IMR-90 (cell line): ENCODE measurements at regions of chr15 and their contacts with region 1.

Region 1: GRCh38 chr15:85831415-85832113 is 36.8 kb upstream of the KLHL25 start:
- DNase-seq: peak; percentile 48
- ATAC-seq: peak; percentile 99
- H3K4me3 ChIP-seq: no peak overlapping the region
- H3K27ac ChIP-seq: no peak overlapping the region
- H3K4me1 ChIP-seq: no peaks in the 10 kb centered on the region
- H3K27me3 ChIP-seq: peaks cover 10% of the 10 kb centered on the region
- CTCF ChIP-seq: peak; percentile 70
- POLR2A ChIP-seq: no peak
- RAD21 ChIP-seq: peak; percentile 73

Region 2: GRCh38 chr15:85289677-85290365 is 541.7 kb before region 1 on chr15:
- CTCF ChIA-PET with region 1: no interaction called
- POLR2A ChIA-PET with region 1: no interaction called
- dilution Hi-C with region 1: no loop called
- in situ Hi-C with region 1: loop called (anchors 5 kb)
- intact Hi-C with region 1: no loop called
- DNase-seq: peak; percentile 31
- ATAC-seq: peak; percentile 59
- H3K4me3 ChIP-seq: no peak overlapping the region
- H3K27ac ChIP-seq: no peak overlapping the region
- H3K4me1 ChIP-seq: no peaks in the 10 kb centered on the region
- H3K27me3 ChIP-seq: peaks cover 3% of the 10 kb centered on the region; the same call in 1 of the 2 replicates
- CTCF ChIP-seq: peak; percentile 59
- POLR2A ChIP-seq: no peak
- RAD21 ChIP-seq: peak; percentile 58; the same call in 1 of the 2 replicates

Region 3: GRCh38 chr15:85485956-85486567 is 345.5 kb before region 1 on chr15:
- CTCF ChIA-PET with region 1: no interaction called
- POLR2A ChIA-PET with region 1: no interaction called
- dilution Hi-C with region 1: no loop called
- in situ Hi-C with region 1: loop called (anchors 10 kb)
- intact Hi-C with region 1: loop called (anchors 2 kb)
- DNase-seq: peak; percentile 81
- ATAC-seq: peak; percentile 61
- H3K4me3 ChIP-seq: no peak overlapping the region
- H3K27ac ChIP-seq: no peak overlapping the region
- H3K4me1 ChIP-seq: peaks cover 4% of the 10 kb centered on the region
- H3K27me3 ChIP-seq: no peaks in the 10 kb centered on the region
- CTCF ChIP-seq: peak; percentile 68
- POLR2A ChIP-seq: no peak
- RAD21 ChIP-seq: peak; percentile 81

Region 4: GRCh38 chr15:85592148-85592547 is 239.4 kb before region 1 on chr15:
- CTCF ChIA-PET with region 1: no interaction called
- POLR2A ChIA-PET with region 1: no interaction called
- dilution Hi-C with region 1: no loop called
- in situ Hi-C with region 1: loop called (anchors 10 kb)
- intact Hi-C with region 1: loop called (anchors 1 kb)
- DNase-seq: peak; percentile 86
- ATAC-seq: peak; percentile 60
- H3K4me3 ChIP-seq: no peak overlapping the region
- H3K27ac ChIP-seq: no peak overlapping the region
- H3K4me1 ChIP-seq: peaks cover 8% of the 10 kb centered on the region; the same call in 1 of the 2 replicates
- H3K27me3 ChIP-seq: no peaks in the 10 kb centered on the region
- CTCF ChIP-seq: peak; percentile 53
- POLR2A ChIP-seq: no peak
- RAD21 ChIP-seq: peak; percentile 68

Region 5: DNA sequence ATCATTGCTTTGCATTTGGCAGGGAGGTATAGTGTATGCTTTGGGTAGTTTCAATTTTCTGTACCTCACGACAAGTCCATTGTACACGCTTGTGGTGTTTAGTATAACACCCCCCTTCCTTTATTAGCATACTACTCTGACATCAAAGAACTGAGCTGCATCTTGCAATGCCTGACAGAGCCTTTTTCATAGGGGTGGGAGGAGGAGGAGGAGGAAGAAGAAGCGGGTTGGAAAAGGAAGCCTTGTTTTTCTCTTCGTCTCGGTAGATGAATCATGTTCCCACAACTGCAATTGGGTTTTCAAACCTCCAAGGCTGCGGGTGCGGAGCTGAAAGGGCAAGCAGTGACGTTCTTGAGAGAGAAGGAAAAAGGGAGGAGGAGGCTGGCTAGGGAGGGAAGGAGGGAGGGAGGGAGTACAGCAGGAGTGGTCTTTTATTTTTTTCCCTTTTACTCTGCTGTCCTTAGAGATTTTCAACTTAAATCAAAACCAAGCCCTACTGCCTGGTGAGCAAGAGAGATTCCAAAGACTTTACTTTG is 212.5 kb before region 1 on chr15:
- CTCF ChIA-PET with region 1: no interaction called
- POLR2A ChIA-PET with region 1: no interaction called
- dilution Hi-C with region 1: no loop called
- in situ Hi-C with region 1: no loop called
- intact Hi-C with region 1: loop called (anchors 10 kb)
- DNase-seq: peak; percentile 98
- ATAC-seq: peak; percentile 86
- H3K4me3 ChIP-seq: peak overlapping the region; percentile 61
- H3K27ac ChIP-seq: peak overlapping the region; percentile 52
- H3K4me1 ChIP-seq: peaks cover 21% of the 10 kb centered on the region
- H3K27me3 ChIP-seq: no peaks in the 10 kb centered on the region
- CTCF ChIP-seq: no peak
- POLR2A ChIP-seq: peak; percentile 51; the same call in 1 of the 2 replicates
- RAD21 ChIP-seq: no peak; the same call in 1 of the 2 replicates

Region 6: DNA sequence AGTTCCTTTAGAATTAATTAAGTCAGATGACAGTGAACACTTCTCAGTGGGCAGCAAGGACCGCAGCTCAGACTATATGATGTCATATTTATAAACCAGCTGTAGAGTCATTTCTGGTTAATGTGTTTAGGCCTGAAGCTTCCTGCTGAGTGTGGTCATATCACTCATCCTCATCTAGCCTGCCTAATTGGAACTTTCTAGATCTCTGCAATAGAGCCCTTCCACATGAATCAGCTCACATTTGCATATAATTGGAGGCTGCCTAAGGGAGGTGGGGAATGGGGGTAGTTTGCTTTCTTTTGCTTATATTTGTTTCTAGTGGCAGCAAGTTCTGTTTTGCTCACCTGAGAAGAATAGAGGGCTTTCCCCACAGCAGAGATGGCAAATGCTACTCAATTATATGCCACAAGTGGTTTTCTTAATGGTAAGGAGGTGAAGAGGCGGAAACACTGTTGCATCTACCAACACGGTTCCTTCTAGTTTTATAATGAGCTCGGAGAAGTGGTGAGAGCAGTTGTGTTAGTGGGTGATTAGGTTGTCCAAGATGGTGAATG is 184.9 kb before region 1 on chr15:
- CTCF ChIA-PET with region 1: no interaction called
- POLR2A ChIA-PET with region 1: interaction called, 17 read pairs
- dilution Hi-C with region 1: no loop called
- in situ Hi-C with region 1: no loop called
- intact Hi-C with region 1: no loop called
- DNase-seq: peak; percentile 93
- ATAC-seq: peak; percentile 76
- H3K4me3 ChIP-seq: no peak overlapping the region
- H3K27ac ChIP-seq: no peak overlapping the region
- H3K4me1 ChIP-seq: peaks cover 15% of the 10 kb centered on the region
- H3K27me3 ChIP-seq: no peaks in the 10 kb centered on the region
- CTCF ChIP-seq: no peak
- POLR2A ChIP-seq: no peak
- RAD21 ChIP-seq: no peak

Region 7: DNA sequence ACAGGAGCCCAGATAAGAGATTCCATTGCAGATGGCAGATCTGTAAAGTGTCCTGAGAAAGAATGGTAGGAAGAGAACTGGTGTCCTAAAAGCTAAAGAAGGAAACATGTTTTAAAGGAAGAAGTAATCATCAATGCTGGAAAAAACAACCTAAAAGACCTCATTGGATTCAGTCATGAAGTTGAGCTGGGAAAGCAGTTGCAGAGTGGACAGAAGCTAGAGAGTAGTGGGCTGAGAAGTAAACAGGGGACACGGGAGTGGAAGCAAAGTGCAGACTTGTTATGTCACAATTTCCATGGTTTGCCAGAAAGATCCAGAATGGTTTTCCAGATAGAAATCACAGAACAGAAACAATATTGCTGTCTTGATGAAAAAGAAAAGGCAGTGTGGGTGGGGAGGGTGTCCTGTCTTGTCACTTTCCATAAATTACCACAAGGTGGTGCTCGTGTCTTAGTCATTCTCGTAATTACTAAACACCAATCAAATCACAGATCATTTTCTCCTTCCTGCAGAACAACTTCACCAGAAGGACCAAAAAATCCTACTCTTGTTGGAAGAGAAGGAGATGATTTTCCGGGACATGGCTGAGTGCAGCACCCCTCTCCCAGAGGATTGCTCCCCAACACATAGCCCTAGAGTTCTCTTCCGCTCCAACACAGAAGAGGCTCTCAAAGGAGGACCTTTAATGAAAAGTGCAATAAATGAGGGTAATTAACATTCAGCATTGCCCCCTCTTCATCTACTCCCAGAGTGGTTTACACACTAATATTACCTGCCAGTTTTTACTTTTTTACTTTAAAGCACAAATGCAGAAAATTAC is 101.4 kb before region 1 on chr15:
- CTCF ChIA-PET with region 1: no interaction called
- POLR2A ChIA-PET with region 1: no interaction called
- dilution Hi-C with region 1: no loop called
- in situ Hi-C with region 1: loop called (anchors 5 kb)
- intact Hi-C with region 1: loop called (anchors 1 kb)
- DNase-seq: peak; percentile 71
- ATAC-seq: peak; percentile 73
- H3K4me3 ChIP-seq: no peak overlapping the region
- H3K27ac ChIP-seq: no peak overlapping the region
- H3K4me1 ChIP-seq: peaks cover 4% of the 10 kb centered on the region
- H3K27me3 ChIP-seq: no peaks in the 10 kb centered on the region
- CTCF ChIP-seq: peak; percentile 80
- POLR2A ChIP-seq: no peak
- RAD21 ChIP-seq: peak; percentile 80